OCI-LY7 (cell line): ENCODE measurements at regions of chr17 and their contacts with region 1.

Region 1: DNA sequence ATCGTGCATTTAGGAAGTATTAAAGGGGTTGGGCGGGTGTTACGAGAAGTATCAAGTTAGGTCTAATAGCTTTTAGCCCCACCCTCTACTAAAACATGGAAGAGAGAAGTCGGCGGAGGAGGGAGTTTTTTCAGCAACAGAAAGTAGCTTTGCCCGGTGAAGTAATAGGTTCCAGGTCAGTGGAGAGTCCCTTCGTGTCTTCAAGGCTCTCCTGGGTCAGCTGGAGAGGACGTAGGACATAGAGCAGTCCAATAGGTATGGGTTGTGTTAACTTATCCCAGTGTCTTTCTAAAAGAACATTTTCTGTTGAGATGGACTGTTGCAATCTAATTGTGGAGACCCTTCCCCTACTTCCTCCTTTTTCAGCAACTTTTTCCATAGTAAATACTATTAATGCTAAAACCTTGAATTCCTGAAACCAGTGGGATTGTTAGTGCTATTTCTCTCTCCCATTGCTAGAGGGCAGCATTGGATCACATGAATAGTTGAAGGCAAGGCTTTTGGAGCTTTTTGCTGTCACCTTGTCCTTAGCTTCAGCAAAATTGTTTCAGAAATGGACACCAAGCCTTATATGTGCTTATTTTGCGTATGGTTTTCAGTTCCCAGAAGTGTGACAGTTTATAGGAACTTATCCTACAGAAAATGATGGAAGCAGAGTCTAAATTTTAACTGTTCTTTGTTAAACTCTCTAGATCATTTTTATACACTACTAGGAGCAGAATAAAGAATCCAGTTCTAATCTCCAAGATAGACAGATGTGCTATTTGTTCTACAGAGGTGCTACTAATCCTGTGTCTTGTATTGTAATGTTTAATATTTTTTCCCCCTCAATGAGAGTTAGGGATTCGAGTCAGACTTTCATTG is 38.4 kb downstream of the UTP18 start:
- DNase-seq: peak; percentile 55
- H3K4me3 ChIP-seq: no peak overlapping the region
- H3K27ac ChIP-seq: no peak overlapping the region
- H3K4me1 ChIP-seq: no peaks in the 10 kb centered on the region
- CTCF ChIP-seq: peak; percentile 86

Region 2: GRCh38 chr17:51537996-51538550 is 239.3 kb after region 1 on chr17:
- CTCF ChIA-PET with region 1: no interaction called
- POLR2A ChIA-PET with region 1: no interaction called
- intact Hi-C with region 1: loop called (anchors 10 kb)
- DNase-seq: no peak
- H3K4me3 ChIP-seq: no peak overlapping the region
- H3K27ac ChIP-seq: no peak overlapping the region
- H3K4me1 ChIP-seq: no peaks in the 10 kb centered on the region
- CTCF ChIP-seq: no peak

Region 3: GRCh38 chr17:51901242-51901641 is 602.5 kb after region 1 on chr17:
- CTCF ChIA-PET with region 1: no interaction called
- POLR2A ChIA-PET with region 1: no interaction called
- intact Hi-C with region 1: no loop called
- DNase-seq: no peak
- H3K4me3 ChIP-seq: no peak overlapping the region
- H3K27ac ChIP-seq: no peak overlapping the region
- H3K4me1 ChIP-seq: no peaks in the 10 kb centered on the region
- CTCF ChIP-seq: no peak